Calu3 (cell line): ENCODE measurements at regions of chr14 and their contacts with region 1.

Region 1: GRCh38 chr14:102655170-102655569 is 62.7 kb downstream of the RCOR1 start:
- DNase-seq: peak; percentile 9
- H3K4me3 Mint-ChIP-seq: peak overlapping the region; percentile 7
- H3K27ac Mint-ChIP-seq: peak overlapping the region; percentile 63
- H3K4me1 Mint-ChIP-seq: peaks cover 36% of the 10 kb centered on the region
- H3K27me3 Mint-ChIP-seq: no peaks in the 10 kb centered on the region
- CTCF ChIP-seq: no peak

Region 2: DNA sequence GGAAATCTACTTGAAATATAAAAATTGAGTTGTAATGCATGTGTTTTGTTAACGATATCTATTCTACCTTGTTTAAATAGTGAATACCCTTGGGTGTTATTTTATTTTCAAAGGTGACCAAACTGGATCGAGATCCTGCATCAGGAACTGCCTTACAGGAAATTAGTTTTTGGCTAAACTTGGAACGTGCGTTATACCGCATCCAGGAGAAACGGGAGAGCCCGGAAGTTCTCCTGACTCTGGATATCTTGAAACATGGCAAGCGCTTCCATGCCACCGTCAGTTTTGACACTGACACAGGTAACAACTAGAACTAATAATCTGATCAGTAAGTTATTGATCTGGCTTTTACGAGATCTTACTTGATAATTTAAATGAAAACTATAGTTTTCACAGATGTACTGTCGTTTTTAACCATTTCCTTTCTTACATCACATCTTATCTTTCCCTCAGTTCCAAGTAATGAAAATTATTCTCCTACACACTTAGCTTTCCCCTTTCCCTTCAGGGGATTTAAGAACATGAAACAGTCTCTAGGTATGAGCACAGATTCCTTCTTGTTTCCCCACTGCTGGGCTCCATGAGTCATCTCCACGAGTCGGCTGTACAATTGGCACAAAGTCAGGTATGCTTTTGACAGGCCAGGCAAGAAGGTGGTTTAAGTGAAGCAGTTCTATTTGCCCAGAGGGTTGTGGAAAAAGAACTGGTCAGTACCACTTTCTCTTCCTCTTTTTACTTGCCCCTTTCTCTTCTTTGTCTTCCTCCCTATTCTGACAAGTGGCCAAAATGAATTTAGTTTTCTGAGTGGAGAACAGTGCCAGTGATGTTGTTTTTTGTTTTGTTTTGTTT is 674.7 kb before region 1 on chr14:
- CTCF ChIA-PET with region 1: interaction called, 11 read pairs
- intact Hi-C with region 1: no loop called
- DNase-seq: peak; percentile 81
- H3K4me3 Mint-ChIP-seq: peak overlapping the region; percentile 62
- H3K27ac Mint-ChIP-seq: peak overlapping the region; percentile 90
- H3K4me1 Mint-ChIP-seq: peaks cover 30% of the 10 kb centered on the region
- H3K27me3 Mint-ChIP-seq: no peaks in the 10 kb centered on the region
- CTCF ChIP-seq: no peak

Region 3: DNA sequence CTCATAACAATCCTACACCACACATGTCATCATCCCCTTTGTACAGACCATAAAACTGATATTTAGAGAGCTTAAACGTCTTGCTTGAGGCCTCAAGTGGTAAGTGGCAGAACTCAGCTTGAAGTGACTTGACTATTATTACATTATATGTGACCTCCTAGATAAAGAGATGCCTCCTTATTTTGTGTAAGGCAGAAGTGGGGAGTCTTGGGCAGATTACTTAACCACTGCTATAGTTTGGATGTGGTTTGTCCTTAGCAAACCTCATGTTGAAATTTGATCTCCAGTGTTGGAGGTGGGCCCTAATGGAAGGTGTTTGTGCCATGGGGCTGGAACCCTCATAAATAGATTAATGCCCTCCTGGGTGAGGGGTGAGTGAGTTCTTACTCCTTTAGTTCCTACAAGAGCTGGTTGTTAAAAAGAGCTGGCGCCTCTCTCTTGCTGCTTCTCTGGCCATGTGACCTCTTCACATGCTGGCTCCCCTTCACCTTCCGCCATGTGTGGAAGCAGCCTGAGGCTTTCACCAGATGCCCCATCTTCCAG is 25.3 kb before region 1 on chr14:
- CTCF ChIA-PET with region 1: no interaction called
- intact Hi-C with region 1: no loop called
- DNase-seq: no peak
- H3K4me3 Mint-ChIP-seq: no peak overlapping the region
- H3K27ac Mint-ChIP-seq: no peak overlapping the region
- H3K4me1 Mint-ChIP-seq: peaks cover 31% of the 10 kb centered on the region
- H3K27me3 Mint-ChIP-seq: no peaks in the 10 kb centered on the region
- CTCF ChIP-seq: no peak

Region 4: DNA sequence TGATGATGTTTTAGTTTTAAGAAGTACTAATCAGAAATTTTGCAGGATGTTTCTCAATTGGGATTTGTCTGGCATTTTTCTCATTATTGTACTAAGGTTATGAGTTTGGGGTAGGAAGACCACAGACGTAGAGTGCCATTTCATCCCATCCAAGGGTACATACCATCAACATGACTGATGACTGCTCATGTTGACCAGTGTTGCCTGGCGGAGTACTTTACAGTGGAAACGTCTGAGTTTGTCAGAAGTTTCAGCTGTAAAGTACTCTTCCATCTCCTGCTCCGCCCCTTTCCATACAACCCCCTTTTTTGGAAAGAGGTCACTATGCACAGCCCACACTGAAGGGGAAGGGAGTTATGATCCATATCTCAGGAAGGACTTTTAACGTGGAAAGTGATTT is 11.5 kb after region 1 on chr14:
- CTCF ChIA-PET with region 1: interaction called, 16 read pairs
- intact Hi-C with region 1: no loop called
- DNase-seq: no peak
- H3K4me3 Mint-ChIP-seq: no peak overlapping the region
- H3K27ac Mint-ChIP-seq: no peak overlapping the region
- H3K4me1 Mint-ChIP-seq: peaks cover 42% of the 10 kb centered on the region
- H3K27me3 Mint-ChIP-seq: no peaks in the 10 kb centered on the region
- CTCF ChIP-seq: no peak

Region 5: DNA sequence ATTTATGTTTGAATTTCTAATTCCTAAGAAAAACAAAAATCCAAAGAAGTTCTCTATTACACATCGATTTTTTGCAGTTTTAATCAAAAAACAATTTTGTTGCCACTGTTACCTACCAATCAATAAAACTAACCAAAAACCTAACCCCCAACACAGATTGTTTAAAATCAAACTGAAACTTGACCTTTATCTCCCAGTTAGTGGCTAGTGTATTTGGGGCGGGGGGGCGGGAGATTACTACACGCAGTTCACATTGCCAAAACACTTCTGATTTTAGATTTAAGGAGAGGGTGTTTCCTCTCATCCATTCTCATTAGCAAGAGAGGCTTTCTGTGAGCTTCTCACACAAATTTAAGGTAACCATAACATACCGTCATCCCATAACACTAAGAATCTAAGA is 395.8 kb after region 1 on chr14:
- CTCF ChIA-PET with region 1: interaction called, 14 read pairs
- intact Hi-C with region 1: no loop called
- DNase-seq: no peak
- H3K4me3 Mint-ChIP-seq: no peak overlapping the region
- H3K27ac Mint-ChIP-seq: no peak overlapping the region
- H3K4me1 Mint-ChIP-seq: peaks cover 37% of the 10 kb centered on the region
- H3K27me3 Mint-ChIP-seq: no peaks in the 10 kb centered on the region
- CTCF ChIP-seq: no peak